ENCODE measurements at regions of chr20 and their contacts with region 1.

Region 1: GRCh38 chr20:5126512-5127203 is at the start of gene CDS2:
- DNase-seq: peak; percentile 99
- ATAC-seq: peak; percentile 93
- H3K4me3 ChIP-seq: peak within 1 kb of the TSS; percentile 64
- H3K4me3 Mint-ChIP-seq: peak within 1 kb of the TSS; percentile 87 to 96 (median 93)
- H3K27ac ChIP-seq: peak within 1 kb of the TSS; percentile 99
- H3K27ac Mint-ChIP-seq: peak within 1 kb of the TSS; percentile 85 to 99 (median 94)
- H3K4me1 ChIP-seq: peaks cover 19 to 27% of the 10 kb centered on the region in 2 donors
- H3K4me1 Mint-ChIP-seq: peaks cover 15 to 58% (median 41%) of the 10 kb centered on the region in 7 donors
- H3K27me3 ChIP-seq: no peaks in the 10 kb centered on the region
- H3K27me3 Mint-ChIP-seq: no peaks in the 10 kb centered on the region
- total RNA-seq, gene CDS2: 48.3 to 58.3 (median 57.8) TPM

Region 2: DNA sequence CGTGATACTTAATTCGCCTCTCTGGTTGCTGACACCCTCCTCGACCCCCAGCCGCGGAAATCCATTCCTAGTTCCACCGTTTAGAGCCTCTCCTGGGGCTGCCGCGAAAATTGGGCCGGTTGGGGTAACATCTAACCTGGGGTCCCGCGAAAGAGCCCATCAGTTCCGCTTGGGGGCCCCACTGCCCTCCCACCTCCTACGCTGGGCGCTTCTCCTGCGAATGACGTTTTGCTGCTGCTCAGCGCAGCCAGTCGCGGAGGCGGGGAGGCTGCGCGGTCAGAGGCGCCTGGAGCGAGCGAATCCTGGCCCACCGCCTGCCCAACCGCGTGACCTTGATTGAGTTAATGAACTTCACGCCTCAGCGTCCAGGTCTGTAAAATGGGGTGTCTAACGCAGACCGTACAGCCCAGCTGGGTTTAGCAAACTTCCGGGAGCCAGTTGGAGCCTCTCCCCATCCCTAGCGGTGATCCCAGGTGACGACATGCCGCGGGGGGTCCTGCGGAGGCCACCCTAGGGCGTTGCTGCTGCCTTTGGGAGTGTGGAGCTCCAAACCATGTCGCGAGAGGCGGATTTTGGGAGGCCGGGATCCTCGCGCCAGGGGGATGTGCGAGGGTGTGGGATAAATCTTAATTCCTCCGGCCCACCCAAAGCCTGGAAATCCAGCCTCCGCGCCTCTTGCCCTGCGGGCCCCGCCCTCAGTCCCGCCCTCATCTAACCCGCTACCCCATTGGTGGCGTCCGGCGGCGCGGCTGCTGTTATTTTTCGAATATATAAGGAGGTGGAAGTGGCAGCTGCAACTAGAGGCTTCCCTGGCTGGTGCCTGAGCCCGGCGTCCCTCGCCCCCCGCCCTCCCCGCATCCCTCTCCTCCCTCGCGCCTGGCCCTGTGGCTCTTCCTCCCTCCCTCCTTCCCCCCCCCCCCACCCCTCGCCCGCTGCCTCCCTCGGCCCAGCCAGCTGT is 1330.9 kb before region 1 on chr20 and contains the start of gene CDC25B:
- CTCF ChIA-PET with region 1: no interaction called
- POLR2A ChIA-PET with region 1: no interaction called
- intact Hi-C with region 1: loop called in 1 of 2 experiments (anchors 5 kb)
- DNase-seq: peak; percentile 64 to 89 (median 84)
- ATAC-seq: peak; percentile 90
- H3K4me3 ChIP-seq: peak within 1 kb of the TSS; percentile 90
- H3K4me3 Mint-ChIP-seq: peak within 1 kb of the TSS; percentile 90 to 99 (median 98)
- H3K27ac ChIP-seq: peak within 1 kb of the TSS; percentile 95
- H3K27ac Mint-ChIP-seq: peak within 1 kb of the TSS; percentile 81 to 99 (median 97)
- H3K4me1 ChIP-seq: peaks cover 27 to 39% of the 10 kb centered on the region in 2 donors
- H3K4me1 Mint-ChIP-seq: peaks cover 24 to 43% (median 39%) of the 10 kb centered on the region in 7 donors
- H3K27me3 ChIP-seq: no peaks in the 10 kb centered on the region
- H3K27me3 Mint-ChIP-seq: peaks cover 0 to 7% (median 0%) of the 10 kb centered on the region in 5 donors
- total RNA-seq, gene CDC25B: 166 to 392 (median 281) TPM

Region 3: GRCh38 chr20:5033571-5033970 is 93.1 kb before region 1 on chr20:
- CTCF ChIA-PET with region 1: no interaction called
- POLR2A ChIA-PET with region 1: no interaction called
- intact Hi-C with region 1: no loop called
- DNase-seq: no peak
- ATAC-seq: no peak
- H3K4me3 ChIP-seq: no peak overlapping the region
- H3K4me3 Mint-ChIP-seq: no peak overlapping the region
- H3K27ac ChIP-seq: no peak overlapping the region
- H3K27ac Mint-ChIP-seq: no peak overlapping the region
- H3K4me1 ChIP-seq: peaks cover 0 to 4% of the 10 kb centered on the region in 2 donors
- H3K4me1 Mint-ChIP-seq: peaks cover 0 to 5% (median 0%) of the 10 kb centered on the region in 7 donors
- H3K27me3 ChIP-seq: no peaks in the 10 kb centered on the region
- H3K27me3 Mint-ChIP-seq: peaks cover 0 to 3% (median 0%) of the 10 kb centered on the region in 5 donors

Region 4: GRCh38 chr20:5191829-5192569 is 65.3 kb after region 1 on chr20:
- CTCF ChIA-PET with region 1: interaction called, 60 read pairs
- POLR2A ChIA-PET with region 1: interaction called, 15 read pairs
- intact Hi-C with region 1: loop called (anchors 1 kb)
- DNase-seq: peak in 7 of 9 donors; percentile 36 to 66 (median 54)
- ATAC-seq: peak; percentile 89
- H3K4me3 ChIP-seq: no peak overlapping the region
- H3K4me3 Mint-ChIP-seq: no peak overlapping the region
- H3K27ac ChIP-seq: peak overlapping the region; percentile 40
- H3K27ac Mint-ChIP-seq: peak overlapping the region in 8 of 9 donors; percentile 2 to 93 (median 80)
- H3K4me1 ChIP-seq: no peaks in the 10 kb centered on the region
- H3K4me1 Mint-ChIP-seq: peaks cover 0 to 18% (median 0%) of the 10 kb centered on the region in 7 donors
- H3K27me3 ChIP-seq: no peaks in the 10 kb centered on the region
- H3K27me3 Mint-ChIP-seq: no peaks in the 10 kb centered on the region

Region 5: DNA sequence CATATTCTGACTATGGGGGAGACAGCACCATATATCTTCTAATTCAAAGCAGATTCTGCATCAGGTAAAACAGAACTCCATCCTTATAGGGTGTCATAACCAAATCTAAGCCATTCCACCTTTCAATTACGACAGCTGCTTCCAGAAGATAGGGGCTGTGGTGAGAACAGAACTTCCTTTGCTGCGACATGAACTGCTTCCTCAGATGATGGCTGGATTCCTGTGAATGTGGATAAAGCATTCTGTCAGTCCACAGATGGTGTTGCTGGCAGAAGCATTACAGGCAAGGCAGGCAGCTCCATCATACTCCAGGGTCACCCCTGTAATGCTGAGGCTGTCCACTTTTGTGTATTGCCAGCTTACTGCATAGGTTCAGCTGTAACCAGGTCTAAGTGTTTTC is 362.2 kb after region 1 on chr20:
- CTCF ChIA-PET with region 1: no interaction called
- POLR2A ChIA-PET with region 1: no interaction called
- intact Hi-C with region 1: no loop called
- DNase-seq: no peak
- ATAC-seq: no peak
- H3K4me3 ChIP-seq: no peak overlapping the region
- H3K4me3 Mint-ChIP-seq: no peak overlapping the region
- H3K27ac ChIP-seq: no peak overlapping the region
- H3K27ac Mint-ChIP-seq: no peak overlapping the region
- H3K4me1 ChIP-seq: no peaks in the 10 kb centered on the region
- H3K4me1 Mint-ChIP-seq: peaks cover 0 to 18% (median 11%) of the 10 kb centered on the region in 7 donors
- H3K27me3 ChIP-seq: no peaks in the 10 kb centered on the region
- H3K27me3 Mint-ChIP-seq: peaks cover 26 to 45% (median 32%) of the 10 kb centered on the region in 5 donors

Region 6: DNA sequence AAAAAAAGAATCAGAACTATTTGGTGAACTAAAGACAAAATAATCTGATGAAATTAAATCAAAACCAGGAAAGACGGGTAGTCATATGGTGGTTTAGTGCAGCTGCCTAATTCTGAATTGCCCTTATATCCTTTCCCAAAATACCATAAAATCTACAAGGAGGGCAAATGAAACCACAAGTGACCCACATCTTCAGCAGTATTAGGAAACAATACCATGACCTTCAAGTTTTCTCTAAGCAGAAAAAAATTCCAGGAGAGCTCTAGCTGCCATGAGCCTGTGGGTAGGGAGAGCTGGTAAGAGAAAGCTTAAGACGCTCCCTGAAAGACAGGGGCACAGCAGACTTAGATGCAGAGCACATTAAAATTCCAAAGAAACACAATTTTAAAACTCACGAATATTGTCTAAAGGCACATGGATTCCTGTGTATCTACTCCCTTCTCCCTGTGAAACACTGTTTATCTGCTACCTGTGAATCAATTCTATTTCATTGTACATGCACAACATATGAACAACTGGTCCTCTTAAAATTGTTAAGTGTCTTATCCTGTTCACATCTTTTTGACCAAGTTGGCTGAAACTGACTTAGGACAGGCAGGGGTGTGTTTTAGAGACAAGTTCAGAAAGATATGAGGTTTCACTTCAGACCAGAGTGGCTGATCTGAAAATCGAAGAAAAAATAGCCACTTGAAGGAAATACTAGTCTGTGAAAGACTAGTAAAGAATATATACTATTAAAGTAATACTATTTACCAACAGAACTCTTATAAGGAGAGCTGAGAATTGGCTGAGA is 469.9 kb after region 1 on chr20:
- CTCF ChIA-PET with region 1: no interaction called
- POLR2A ChIA-PET with region 1: no interaction called
- intact Hi-C with region 1: loop called in 1 of 2 experiments (anchors 10 kb)
- DNase-seq: no peak
- ATAC-seq: no peak
- H3K4me3 ChIP-seq: no peak overlapping the region
- H3K4me3 Mint-ChIP-seq: peak overlapping the region in 9 of 10 donors; percentile 2 to 74 (median 29)
- H3K27ac ChIP-seq: peak overlapping the region; percentile 52
- H3K27ac Mint-ChIP-seq: peak overlapping the region; percentile 47 to 88 (median 77)
- H3K4me1 ChIP-seq: peaks cover 21 to 58% of the 10 kb centered on the region in 2 donors
- H3K4me1 Mint-ChIP-seq: peaks cover 38 to 76% (median 70%) of the 10 kb centered on the region in 7 donors
- H3K27me3 ChIP-seq: no peaks in the 10 kb centered on the region
- H3K27me3 Mint-ChIP-seq: no peaks in the 10 kb centered on the region

Region 7: GRCh38 chr20:5950271-5951031 is 823.8 kb after region 1 on chr20 and contains the starts of genes MCM8 and TRMT6:
- CTCF ChIA-PET with region 1: no interaction called
- POLR2A ChIA-PET with region 1: no interaction called
- intact Hi-C with region 1: loop called (anchors 5 kb)
- DNase-seq: peak; percentile 82 to 97 (median 95)
- ATAC-seq: peak; percentile 97
- H3K4me3 ChIP-seq: peak within 1 kb of the TSS; percentile 89
- H3K4me3 Mint-ChIP-seq: peak within 1 kb of the TSS; percentile 91 to 99 (median 96)
- H3K27ac ChIP-seq: peak within 1 kb of the TSS; percentile 82
- H3K27ac Mint-ChIP-seq: peak within 1 kb of the TSS; percentile 91 to 100 (median 97)
- H3K4me1 ChIP-seq: peaks cover 13 to 17% of the 10 kb centered on the region in 2 donors
- H3K4me1 Mint-ChIP-seq: peaks cover 7 to 61% (median 45%) of the 10 kb centered on the region in 7 donors
- H3K27me3 ChIP-seq: no peaks in the 10 kb centered on the region
- H3K27me3 Mint-ChIP-seq: peaks cover 0 to 4% (median 0%) of the 10 kb centered on the region in 5 donors
- total RNA-seq, gene MCM8: 2.6 to 22.7 (median 10.8) TPM
- total RNA-seq, gene TRMT6: 14.5 to 18.5 (median 17.8) TPM